K562 (cell line): ENCODE measurements at regions of chr11 and their contacts with region 1.

Region 1: DNA sequence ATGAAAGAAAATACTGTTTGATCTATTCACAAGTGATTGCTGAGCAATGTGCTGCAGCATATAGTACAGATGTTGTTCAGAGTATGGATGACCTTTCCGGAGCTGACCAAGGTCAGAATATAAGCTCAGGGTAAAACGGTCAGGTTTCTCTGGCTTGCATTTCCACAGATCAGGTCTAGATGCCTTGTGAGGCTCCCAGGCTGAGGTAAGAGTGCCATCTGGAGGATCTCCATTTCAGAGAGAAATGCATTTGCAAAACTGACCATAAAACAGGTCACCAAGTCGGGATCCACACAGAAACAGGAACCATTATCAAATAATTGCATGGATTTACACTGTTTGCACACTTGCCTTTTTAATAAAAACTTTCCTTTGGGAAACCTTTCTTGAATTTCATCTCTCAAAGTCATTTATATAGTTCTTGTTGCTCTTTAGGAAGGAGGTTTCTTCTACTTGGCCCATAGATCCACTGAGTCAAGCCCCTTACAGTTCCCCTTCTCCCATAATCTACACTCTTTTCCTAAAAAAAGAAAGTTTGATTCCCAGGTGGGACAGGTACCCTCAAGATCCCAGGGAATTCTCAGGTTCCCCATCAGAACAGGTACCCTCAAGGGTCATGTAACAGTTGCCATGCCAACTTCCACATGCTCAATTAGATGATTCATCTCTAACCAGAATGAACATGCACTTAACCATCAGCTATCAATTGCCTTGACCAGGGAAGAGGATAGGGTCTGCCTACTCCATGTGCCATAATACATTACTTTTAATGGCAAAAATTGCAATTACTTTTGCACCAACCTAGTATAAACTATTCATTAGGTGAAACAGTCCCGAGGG is 25.0 kb upstream of the TMPRSS5 start:
- DNase-seq: peak; percentile 40 to 80 (median 52)
- ATAC-seq: peak; percentile 93
- H3K4me3 ChIP-seq: no peak overlapping the region
- H3K27ac ChIP-seq: no peak overlapping the region
- H3K4me1 ChIP-seq: peaks cover 7 to 13% of the 10 kb centered on the region in 2 experiments; a peak in 4 of 5 replicates
- H3K27me3 ChIP-seq: no peaks in the 10 kb centered on the region
- CTCF ChIP-seq: peak; percentile 78 to 91 (median 78)
- EP300 ChIP-seq: no peak
- POLR2A ChIP-seq: no peak
- RAD21 ChIP-seq: peak; percentile 95 to 97

Region 2: DNA sequence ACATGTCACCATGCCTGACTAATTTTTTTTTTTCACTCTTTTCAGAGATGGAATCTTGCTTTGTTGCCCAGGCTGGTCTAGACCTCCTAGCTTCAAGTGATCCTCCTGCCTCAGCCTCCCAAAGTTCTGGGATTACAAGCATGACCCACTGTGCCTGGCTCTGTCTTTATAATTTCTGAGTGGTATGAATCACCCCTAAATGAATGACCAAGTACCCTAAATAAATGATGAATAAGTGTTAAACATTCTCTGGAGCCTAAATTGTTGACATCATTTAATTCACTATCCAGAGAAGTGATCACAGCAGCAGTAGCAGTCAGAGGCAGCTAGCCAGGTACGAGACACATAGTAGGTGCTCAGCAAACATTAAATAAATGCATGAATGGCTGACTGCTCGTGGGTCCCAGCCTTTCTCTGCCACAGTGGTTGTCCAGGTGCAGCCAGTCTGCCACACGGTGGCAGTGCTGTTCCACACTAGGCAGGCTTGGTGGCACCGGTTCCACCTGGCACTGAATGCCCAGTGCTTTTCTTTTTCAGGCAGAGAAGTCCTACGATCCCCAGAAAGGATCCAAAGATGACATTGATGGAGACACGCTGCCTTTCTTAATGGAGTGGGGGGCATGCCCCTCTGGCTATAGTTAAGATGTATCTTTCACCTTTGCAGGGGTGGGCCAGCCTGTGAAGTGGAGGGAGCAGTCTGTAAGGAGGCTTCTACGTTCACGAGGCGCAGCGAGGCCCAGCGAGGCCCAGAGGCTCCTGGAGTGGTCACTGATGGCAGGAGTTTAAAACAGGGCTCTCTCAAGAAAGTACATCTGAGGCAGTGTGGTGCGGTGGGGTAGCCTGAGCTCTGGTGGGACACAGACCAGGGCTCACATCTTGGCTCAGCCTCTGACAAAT is 425.4 kb before region 1 on chr11:
- CTCF ChIA-PET with region 1: interaction called, 24 read pairs
- POLR2A ChIA-PET with region 1: no interaction called
- in situ Hi-C with region 1: loop called (anchors 5 kb)
- intact Hi-C with region 1: loop called (anchors 1 kb)
- DNase-seq: peak; percentile 38 to 58 (median 45)
- ATAC-seq: peak; percentile 90
- H3K4me3 ChIP-seq: no peak overlapping the region
- H3K27ac ChIP-seq: no peak overlapping the region
- H3K4me1 ChIP-seq: no peaks in the 10 kb centered on the region
- H3K27me3 ChIP-seq: peaks cover 5 to 16% of the 10 kb centered on the region in 2 experiments; a peak in 4 of 5 replicates
- CTCF ChIP-seq: peak; percentile 83 to 90 (median 89)
- EP300 ChIP-seq: no peak
- POLR2A ChIP-seq: no peak
- RAD21 ChIP-seq: peak; percentile 94

Region 3: DNA sequence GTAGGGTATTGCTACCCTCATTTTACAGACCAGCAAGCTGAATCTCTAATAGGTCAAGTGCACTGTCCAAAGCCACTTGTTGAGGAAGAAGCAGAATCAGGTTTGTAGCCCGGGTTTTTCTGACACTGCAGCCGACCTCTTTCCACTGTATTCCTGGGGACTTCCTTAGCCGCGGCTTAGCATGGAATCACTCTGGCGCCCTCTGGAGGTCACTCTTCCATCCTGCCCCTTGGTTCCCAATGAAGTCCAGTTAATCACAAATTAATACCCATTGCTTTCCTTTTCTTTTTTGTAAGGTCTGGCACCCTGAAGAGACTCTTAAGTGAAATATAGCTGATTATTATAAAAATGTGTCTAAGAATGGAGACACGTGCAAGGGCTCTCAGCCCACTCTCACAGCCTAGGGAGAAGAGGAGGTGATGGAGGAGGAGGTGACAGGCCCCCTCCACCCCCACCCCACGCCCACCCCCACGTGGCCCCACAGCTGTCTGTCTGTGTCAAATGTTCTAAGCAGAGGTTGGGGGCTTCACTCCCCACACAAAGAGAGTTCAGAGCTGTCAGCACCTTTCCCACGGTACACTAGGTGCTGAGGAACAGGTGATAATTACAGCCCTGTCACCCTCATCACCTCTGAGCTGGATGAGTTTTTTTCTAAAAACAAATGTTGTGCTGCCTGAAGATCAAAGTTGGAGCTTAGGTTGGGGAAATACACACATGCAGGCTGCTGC is 198.2 kb before region 1 on chr11:
- CTCF ChIA-PET with region 1: no interaction called
- POLR2A ChIA-PET with region 1: no interaction called
- in situ Hi-C with region 1: no loop called
- intact Hi-C with region 1: loop called (anchors 5 kb)
- DNase-seq: peak; percentile 65 to 79 (median 70)
- ATAC-seq: peak; percentile 93
- H3K4me3 ChIP-seq: no peak overlapping the region
- H3K27ac ChIP-seq: no peak overlapping the region
- H3K4me1 ChIP-seq: no peaks in the 10 kb centered on the region; a peak in 1 of 5 replicates
- H3K27me3 ChIP-seq: peaks cover 7 to 12% of the 10 kb centered on the region in 2 experiments; a peak in 4 of 5 replicates
- CTCF ChIP-seq: peak; percentile 79 to 87 (median 84)
- EP300 ChIP-seq: no peak
- POLR2A ChIP-seq: no peak
- RAD21 ChIP-seq: peak; percentile 73 to 79

Region 4: GRCh38 chr11:113553915-113554314 is 177.2 kb before region 1 on chr11:
- CTCF ChIA-PET with region 1: no interaction called
- POLR2A ChIA-PET with region 1: no interaction called
- in situ Hi-C with region 1: no loop called
- intact Hi-C with region 1: loop called (anchors 2 kb)
- DNase-seq: peak; percentile 26 to 55 (median 36)
- ATAC-seq: peak; percentile 66
- H3K4me3 ChIP-seq: no peak overlapping the region
- H3K27ac ChIP-seq: no peak overlapping the region
- H3K4me1 ChIP-seq: peaks cover 8 to 40% of the 10 kb centered on the region in 2 experiments; a peak in 4 of 5 replicates
- H3K27me3 ChIP-seq: no peaks in the 10 kb centered on the region
- CTCF ChIP-seq: peak; percentile 34 to 44 (median 43); a peak in 5 of 6 replicates
- EP300 ChIP-seq: no peak
- POLR2A ChIP-seq: no peak
- RAD21 ChIP-seq: peak in 1 of 2 experiments; percentile 63; a peak in 2 of 4 replicates

Region 5: DNA sequence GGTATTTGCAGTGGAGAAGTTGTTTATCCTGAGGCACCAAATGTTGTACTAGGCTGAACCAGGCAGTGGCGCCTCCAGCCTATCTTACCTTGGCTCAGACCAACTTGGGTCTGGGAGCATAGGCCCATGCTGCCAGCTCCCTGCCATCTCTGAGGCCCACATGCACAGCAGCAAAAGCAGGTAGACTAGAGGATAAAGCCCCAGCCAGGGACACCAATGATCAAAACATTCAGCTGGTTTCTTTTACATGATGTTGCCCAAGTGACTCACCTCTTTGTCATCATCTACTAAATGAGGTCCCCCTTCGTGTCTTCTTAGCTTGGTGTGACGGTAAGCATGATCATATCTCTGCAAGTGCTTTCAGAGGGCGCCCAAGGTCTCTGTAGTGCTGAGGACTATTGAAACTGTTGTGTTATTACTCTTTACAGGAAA is 143.8 kb before region 1 on chr11:
- CTCF ChIA-PET with region 1: interaction called, 15 read pairs
- POLR2A ChIA-PET with region 1: no interaction called
- in situ Hi-C with region 1: no loop called
- intact Hi-C with region 1: loop called (anchors 1 kb)
- DNase-seq: peak in 2 of 4 experiments; percentile 30 to 54
- ATAC-seq: peak; percentile 82
- H3K4me3 ChIP-seq: no peak overlapping the region
- H3K27ac ChIP-seq: no peak overlapping the region
- H3K4me1 ChIP-seq: peaks cover 2 to 8% of the 10 kb centered on the region in 2 experiments; a peak in 4 of 5 replicates
- H3K27me3 ChIP-seq: no peaks in the 10 kb centered on the region
- CTCF ChIP-seq: peak; percentile 43 to 47 (median 44); a peak in 4 of 6 replicates
- EP300 ChIP-seq: 0 out of 2 replicates have a peak, but pooled peaks have one; percentile 16
- POLR2A ChIP-seq: no peak
- RAD21 ChIP-seq: peak; percentile 58 to 80

Region 6: DNA sequence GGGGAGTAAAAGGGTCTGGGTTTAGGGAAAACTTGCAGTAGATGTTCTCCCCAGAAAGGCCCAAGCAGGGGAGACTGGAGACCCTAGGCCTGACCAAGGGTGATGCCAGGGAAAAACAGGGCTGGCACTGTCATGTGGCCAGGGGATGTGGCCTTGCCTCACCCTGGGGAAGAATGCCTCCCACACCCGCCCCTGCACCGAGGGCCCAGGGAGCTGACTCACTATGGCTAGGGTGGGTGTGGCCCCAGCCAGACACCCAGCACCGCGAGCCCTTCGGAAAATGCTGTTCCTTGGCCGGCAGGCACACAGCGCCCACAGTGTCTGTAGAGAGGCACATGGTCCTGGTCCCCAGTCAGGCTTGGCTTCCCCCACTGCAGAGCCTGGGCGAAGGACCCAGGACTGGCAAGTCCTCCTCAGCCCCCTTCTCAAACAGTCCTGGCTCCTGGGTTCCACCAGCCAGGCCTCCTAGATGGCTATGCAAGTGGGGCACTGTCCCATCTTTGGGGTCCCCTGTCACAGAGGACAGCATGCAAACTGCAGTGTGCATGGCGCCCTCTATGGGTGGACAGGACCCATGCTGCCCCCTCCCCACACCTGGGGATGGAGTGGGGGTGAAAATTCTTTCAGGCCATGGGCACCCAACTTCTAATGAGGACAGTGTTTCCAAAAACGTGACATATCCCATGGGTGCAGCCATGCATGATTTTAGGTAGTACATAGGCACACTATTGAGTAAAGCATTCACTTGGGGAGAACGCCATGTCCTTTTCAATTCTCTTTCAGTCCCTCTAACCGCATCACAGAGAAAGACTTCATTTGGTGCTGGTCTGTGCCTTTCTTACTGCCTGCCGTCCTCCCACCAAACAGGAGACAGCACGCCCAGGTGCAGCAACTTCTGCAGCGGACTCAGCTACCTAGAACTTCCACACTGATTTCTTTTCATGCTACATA is 40.2 kb before region 1 on chr11:
- CTCF ChIA-PET with region 1: no interaction called
- POLR2A ChIA-PET with region 1: no interaction called
- in situ Hi-C with region 1: no loop called
- intact Hi-C with region 1: loop called (anchors 2 kb)
- DNase-seq: peak; percentile 92 to 93 (median 92)
- ATAC-seq: peak; percentile 98
- H3K4me3 ChIP-seq: no peak overlapping the region
- H3K27ac ChIP-seq: peak overlapping the region; percentile 87
- H3K4me1 ChIP-seq: peaks cover 22 to 38% of the 10 kb centered on the region in 2 experiments
- H3K27me3 ChIP-seq: no peaks in the 10 kb centered on the region
- CTCF ChIP-seq: peak; percentile 72 to 96 (median 76)
- EP300 ChIP-seq: peak; percentile 45; the same call in 1 of the 2 replicates
- POLR2A ChIP-seq: peak; percentile 70
- RAD21 ChIP-seq: peak; percentile 70 to 83

Region 7: GRCh38 chr11:113796663-113797259 is 65.7 kb after region 1 on chr11:
- CTCF ChIA-PET with region 1: no interaction called
- POLR2A ChIA-PET with region 1: no interaction called
- in situ Hi-C with region 1: no loop called
- intact Hi-C with region 1: no loop called
- DNase-seq: peak; percentile 49 to 60 (median 56)
- ATAC-seq: peak; percentile 99
- H3K4me3 ChIP-seq: no peak overlapping the region
- H3K27ac ChIP-seq: no peak overlapping the region
- H3K4me1 ChIP-seq: no peaks in the 10 kb centered on the region
- H3K27me3 ChIP-seq: no peaks in the 10 kb centered on the region
- CTCF ChIP-seq: peak; percentile 49 to 67 (median 61); a peak in 4 of 6 replicates
- EP300 ChIP-seq: no peak
- POLR2A ChIP-seq: no peak
- RAD21 ChIP-seq: peak in 1 of 2 experiments; percentile 59; a peak in 2 of 4 replicates